PC-3 (cell line): ENCODE measurements at regions of chr2 and their contacts with region 1.

Region 1: DNA sequence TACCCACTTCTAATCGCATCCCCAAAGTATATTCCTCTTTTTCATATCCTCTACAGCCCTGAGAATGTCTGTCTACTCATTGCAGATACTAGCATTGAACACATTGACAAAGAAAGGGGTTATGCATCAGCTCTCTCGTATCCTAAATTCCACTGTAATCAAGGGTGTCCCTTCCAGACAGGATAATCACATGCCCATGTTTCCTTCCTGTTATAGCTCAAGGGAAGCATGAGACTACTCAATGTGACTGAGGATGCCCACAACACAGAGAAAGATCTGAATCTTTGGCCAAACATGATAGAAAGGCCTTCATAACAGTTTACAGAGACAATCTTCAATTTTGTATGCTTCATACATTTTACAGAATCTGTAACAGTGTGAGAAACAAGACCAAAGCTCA is 69.2 kb downstream of the HIBCH start:
- DNase-seq: no peak
- ATAC-seq: no peak
- H3K4me3 ChIP-seq: no peak overlapping the region
- H3K27ac ChIP-seq: no peak overlapping the region
- H3K4me1 ChIP-seq: no peaks in the 10 kb centered on the region
- H3K27me3 ChIP-seq: no peaks in the 10 kb centered on the region
- CTCF ChIP-seq: no peak

Region 2: GRCh38 chr2:190137561-190137960 is 112.9 kb before region 1 on chr2:
- CTCF ChIA-PET with region 1: no interaction called
- POLR2A ChIA-PET with region 1: no interaction called
- intact Hi-C with region 1: no loop called
- DNase-seq: no peak
- ATAC-seq: no peak
- H3K4me3 ChIP-seq: no peak overlapping the region
- H3K27ac ChIP-seq: no peak overlapping the region
- H3K4me1 ChIP-seq: no peaks in the 10 kb centered on the region
- H3K27me3 ChIP-seq: no peaks in the 10 kb centered on the region
- CTCF ChIP-seq: no peak

Region 3: DNA sequence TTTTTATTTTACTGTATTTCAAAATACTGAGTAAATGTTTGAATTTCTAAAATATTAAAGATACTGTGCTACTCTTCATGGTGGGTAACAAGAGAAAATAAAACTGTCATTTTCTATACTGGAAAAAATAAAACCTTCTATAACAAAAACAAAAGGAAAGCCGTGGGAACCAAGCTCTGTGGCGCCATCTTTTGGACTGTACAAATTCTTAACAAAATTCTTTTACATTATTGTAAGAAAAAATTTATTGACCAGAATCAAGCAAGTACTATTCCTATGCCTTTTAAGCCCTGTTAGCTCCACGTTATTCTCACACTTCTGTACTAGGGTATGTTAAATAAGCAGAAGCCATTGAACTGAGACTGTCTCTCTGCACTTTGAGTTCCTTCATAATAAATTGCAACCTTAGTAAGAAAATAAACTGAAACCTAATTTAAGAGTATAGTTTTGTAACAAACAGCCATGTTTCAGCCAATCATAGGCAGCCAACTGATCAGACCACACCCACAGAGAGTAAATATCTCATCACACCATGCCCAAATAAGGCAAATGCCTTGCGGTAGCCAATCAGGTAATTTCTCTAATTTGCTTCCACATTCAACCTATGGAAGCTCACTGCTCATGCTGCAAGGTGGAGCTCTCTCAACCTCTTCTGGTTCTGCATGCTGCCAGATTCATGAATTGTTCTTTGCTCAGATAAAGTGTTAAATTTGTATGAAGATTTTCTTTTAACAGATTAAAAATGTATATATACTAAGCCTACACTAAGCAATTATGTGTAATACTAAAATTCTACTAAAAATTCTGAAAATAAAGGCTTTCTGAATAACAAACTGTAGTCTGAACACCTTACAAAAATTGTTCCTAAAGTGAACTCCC is 27.1 kb after region 1 on chr2:
- CTCF ChIA-PET with region 1: no interaction called
- POLR2A ChIA-PET with region 1: no interaction called
- intact Hi-C with region 1: loop called (anchors 1 kb)
- DNase-seq: peak; percentile 58
- ATAC-seq: peak; percentile 60
- H3K4me3 ChIP-seq: no peak overlapping the region; the same call in 1 of the 2 replicates
- H3K27ac ChIP-seq: no peak overlapping the region
- H3K4me1 ChIP-seq: no peaks in the 10 kb centered on the region
- H3K27me3 ChIP-seq: no peaks in the 10 kb centered on the region
- CTCF ChIP-seq: peak; percentile 73